Kidney (tissue), 22 donors: ENCODE measurements at regions of chr16 and their contacts with region 1.

Region 1: DNA sequence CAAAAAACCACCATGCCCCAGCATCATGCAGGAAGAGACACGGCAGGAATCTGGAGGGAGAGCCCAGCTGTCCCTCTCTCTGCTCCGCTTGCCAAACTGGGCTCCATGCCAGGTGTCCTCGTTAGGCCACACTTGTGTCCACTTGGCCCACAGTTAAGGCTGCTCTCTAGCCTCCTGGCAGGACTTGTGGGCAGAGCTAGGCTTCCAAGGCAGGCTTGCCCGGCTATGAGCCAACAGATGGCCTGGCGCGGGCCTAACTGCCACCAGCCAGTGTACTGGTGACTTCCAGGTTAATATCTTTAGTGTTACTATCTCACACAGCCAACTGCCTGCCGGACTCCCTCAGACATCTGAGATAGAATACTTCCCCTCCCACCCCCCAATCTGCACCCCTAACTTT is 10.6 kb downstream of the ATP6V0D1 start:
- DNase-seq: peak in 1 of 5 donors; percentile 92
- H3K4me3 ChIP-seq: no peak overlapping the region
- H3K27ac ChIP-seq: no peak overlapping the region
- H3K4me1 ChIP-seq: peaks cover 0 to 17% (median 17%) of the 10 kb centered on the region in 3 donors
- H3K27me3 ChIP-seq: no peaks in the 10 kb centered on the region
- CTCF ChIP-seq: no peak

Region 2: GRCh38 chr16:67249178-67250044 is 220.9 kb before region 1 on chr16:
- intact Hi-C with region 1: loop called (anchors 10 kb)
- DNase-seq: peak in 3 of 5 donors; percentile 3 to 73 (median 40)
- H3K4me3 ChIP-seq: peak overlapping the region in 2 of 3 donors; percentile 32 to 39
- H3K27ac ChIP-seq: no peak overlapping the region
- H3K4me1 ChIP-seq: peaks cover 0 to 17% (median 0%) of the 10 kb centered on the region in 3 donors
- H3K27me3 ChIP-seq: peaks cover 13% of the 10 kb centered on the region
- CTCF ChIP-seq: no peak

Region 3: DNA sequence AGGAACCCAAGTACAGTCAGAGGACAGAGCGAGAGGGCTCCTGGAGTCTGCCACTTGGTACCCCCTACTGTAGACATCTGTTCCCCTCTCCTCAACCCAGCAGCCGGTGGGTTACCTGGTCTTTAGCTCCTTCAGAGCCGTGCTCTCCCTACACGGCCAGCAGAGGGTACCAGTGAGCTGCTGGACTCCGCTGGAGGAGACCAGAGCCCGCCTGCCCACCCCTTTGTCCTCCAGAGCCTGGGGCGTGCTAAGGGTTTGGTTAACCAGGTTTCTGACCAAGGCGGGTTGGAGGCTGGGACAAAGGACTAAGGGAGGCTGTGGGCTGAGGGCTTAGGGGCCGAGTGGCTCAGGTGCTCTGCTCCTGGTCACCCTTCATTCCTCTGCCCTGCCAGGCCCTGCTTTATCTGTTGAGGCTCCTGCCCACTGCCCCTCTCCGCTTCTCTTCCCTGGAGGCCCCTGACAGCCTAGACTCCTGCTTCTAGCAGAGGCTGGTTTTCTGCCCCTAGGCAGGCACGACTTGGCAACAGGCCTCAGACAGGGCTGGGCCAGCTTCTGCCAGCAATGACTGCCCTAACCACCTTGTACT is 42.1 kb before region 1 on chr16:
- intact Hi-C with region 1: loop called (anchors 5 kb)
- DNase-seq: peak; percentile 87 to 92 (median 88)
- H3K4me3 ChIP-seq: peak overlapping the region in 1 of 3 donors; percentile 67
- H3K27ac ChIP-seq: peak overlapping the region; percentile 80 to 96
- H3K4me1 ChIP-seq: peaks cover 0 to 32% (median 28%) of the 10 kb centered on the region in 3 donors
- H3K27me3 ChIP-seq: peaks cover 3% of the 10 kb centered on the region
- CTCF ChIP-seq: peak; percentile 78